ENCODE measurements at regions of chr16 and their contacts with region 1.

Region 1: GRCh38 chr16:83552228-83552627 is 255.6 kb upstream of the HSBP1 start:
- DNase-seq: peak; percentile 77
- ATAC-seq: no peak
- H3K4me3 ChIP-seq: no peak overlapping the region
- H3K27ac ChIP-seq: no peak overlapping the region; the same call in 1 of the 2 replicates
- H3K4me1 ChIP-seq: peaks cover 1% of the 10 kb centered on the region; the same call in 1 of the 2 replicates
- H3K27me3 ChIP-seq: no peaks in the 10 kb centered on the region
- CTCF ChIP-seq: no peak
- POLR2A ChIP-seq: no peak
- RAD21 ChIP-seq: no peak

Region 2: DNA sequence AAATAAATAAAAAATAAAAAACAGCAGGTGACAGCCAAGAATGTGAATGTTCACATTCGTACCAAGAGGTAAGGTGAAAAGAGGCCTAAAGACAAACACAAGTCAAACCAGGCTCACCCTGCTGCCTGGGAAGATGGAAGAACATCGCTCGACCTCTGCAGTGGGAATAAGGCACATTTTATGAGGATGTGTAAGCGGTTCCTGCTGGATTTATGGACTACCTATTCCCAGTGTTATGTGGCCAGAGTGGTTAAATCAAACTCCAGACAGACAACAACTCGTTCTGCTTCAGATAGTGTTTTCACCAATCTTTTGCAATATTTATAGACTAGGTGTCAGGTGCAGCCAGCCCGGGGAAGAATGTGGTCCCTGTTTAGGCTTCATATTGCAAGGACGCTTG is 40.5 kb after region 1 on chr16:
- CTCF ChIA-PET with region 1: no interaction called
- POLR2A ChIA-PET with region 1: no interaction called
- dilution Hi-C with region 1: no loop called
- in situ Hi-C with region 1: no loop called
- intact Hi-C with region 1: no loop called
- DNase-seq: no peak
- ATAC-seq: no peak
- H3K4me3 ChIP-seq: no peak overlapping the region
- H3K27ac ChIP-seq: no peak overlapping the region
- H3K4me1 ChIP-seq: no peaks in the 10 kb centered on the region
- H3K27me3 ChIP-seq: no peaks in the 10 kb centered on the region
- CTCF ChIP-seq: no peak
- POLR2A ChIP-seq: no peak
- RAD21 ChIP-seq: no peak

Region 3: DNA sequence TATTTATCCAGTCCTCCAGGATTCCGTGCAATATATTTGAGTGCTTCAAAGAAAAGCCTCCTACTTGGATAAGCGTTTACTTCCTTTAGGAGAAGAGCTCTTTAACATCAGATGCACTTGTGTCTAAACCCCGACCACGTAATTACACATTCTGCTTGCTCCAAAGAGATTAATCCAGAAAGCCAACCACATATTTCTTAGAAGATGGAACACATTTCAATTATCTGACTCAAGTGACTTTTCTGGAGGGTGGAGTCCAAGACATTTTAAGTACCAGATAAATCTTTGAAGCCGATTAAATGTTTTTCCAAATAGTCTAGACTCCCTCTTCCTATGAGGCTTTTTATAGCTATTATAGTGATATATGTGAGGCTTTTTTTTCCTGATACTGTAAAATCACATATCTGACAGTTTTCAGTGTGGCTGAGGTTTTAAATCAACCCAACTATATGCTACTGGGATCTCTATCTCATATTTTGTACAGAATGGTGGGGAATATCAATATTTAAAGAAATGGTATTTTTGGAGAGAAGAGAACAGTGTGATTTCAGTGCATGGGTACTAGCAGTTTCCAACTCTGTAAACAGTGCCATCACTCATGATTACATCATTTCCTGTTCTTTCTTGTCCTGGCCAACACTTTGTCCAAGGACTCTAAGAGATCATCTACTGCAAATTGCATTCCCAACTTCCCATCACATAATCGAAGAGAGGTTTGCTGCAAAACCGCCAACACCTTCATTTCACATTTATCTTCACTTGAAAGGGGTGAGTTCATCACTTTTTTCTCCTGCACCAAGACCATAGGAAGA is 63.1 kb after region 1 on chr16:
- CTCF ChIA-PET with region 1: no interaction called
- POLR2A ChIA-PET with region 1: no interaction called
- dilution Hi-C with region 1: no loop called
- in situ Hi-C with region 1: loop called (anchors 10 kb)
- intact Hi-C with region 1: no loop called
- DNase-seq: peak; percentile 48
- ATAC-seq: no peak; the same call in none of the 2 replicates
- H3K4me3 ChIP-seq: no peak overlapping the region
- H3K27ac ChIP-seq: no peak overlapping the region
- H3K4me1 ChIP-seq: peaks cover 2% of the 10 kb centered on the region; the same call in 1 of the 2 replicates
- H3K27me3 ChIP-seq: no peaks in the 10 kb centered on the region
- CTCF ChIP-seq: no peak
- POLR2A ChIP-seq: no peak
- RAD21 ChIP-seq: no peak

Measured in IMR-90 (cell line).